ENCODE measurements at regions of chr9 and their contacts with region 1.

Region 1: GRCh38 chr9:38088006-38088925 is 19.2 kb upstream of the SHB start:
- DNase-seq: no peak
- ATAC-seq: peak; percentile 70
- H3K4me3 ChIP-seq: no peak overlapping the region
- H3K27ac ChIP-seq: peak overlapping the region; percentile 13; the same call in 1 of the 2 replicates
- H3K4me1 ChIP-seq: peaks cover 37% of the 10 kb centered on the region
- H3K27me3 ChIP-seq: no peaks in the 10 kb centered on the region
- CTCF ChIP-seq: peak; percentile 86 to 98 (median 97)
- EP300 ChIP-seq: no peak
- POLR2A ChIP-seq: no peak
- RAD21 ChIP-seq: peak; percentile 90

Region 2: GRCh38 chr9:36974731-36975130 is 1113.5 kb before region 1 on chr9:
- CTCF ChIA-PET with region 1: no interaction called
- POLR2A ChIA-PET with region 1: no interaction called
- RAD21 ChIA-PET with region 1: no interaction called
- SMC1A ChIA-PET with region 1: no interaction called
- in situ Hi-C with region 1: no loop called
- intact Hi-C with region 1: no loop called
- DNase-seq: no peak
- ATAC-seq: no peak
- H3K4me3 ChIP-seq: no peak overlapping the region
- H3K27ac ChIP-seq: no peak overlapping the region
- H3K4me1 ChIP-seq: no peaks in the 10 kb centered on the region
- H3K27me3 ChIP-seq: no peaks in the 10 kb centered on the region
- CTCF ChIP-seq: peak in 1 of 3 experiments; percentile 26; a peak in 2 of 6 replicates
- EP300 ChIP-seq: no peak
- POLR2A ChIP-seq: 0 out of 2 replicates have a peak, but pooled peaks have one; percentile 29
- RAD21 ChIP-seq: no peak

Region 3: DNA sequence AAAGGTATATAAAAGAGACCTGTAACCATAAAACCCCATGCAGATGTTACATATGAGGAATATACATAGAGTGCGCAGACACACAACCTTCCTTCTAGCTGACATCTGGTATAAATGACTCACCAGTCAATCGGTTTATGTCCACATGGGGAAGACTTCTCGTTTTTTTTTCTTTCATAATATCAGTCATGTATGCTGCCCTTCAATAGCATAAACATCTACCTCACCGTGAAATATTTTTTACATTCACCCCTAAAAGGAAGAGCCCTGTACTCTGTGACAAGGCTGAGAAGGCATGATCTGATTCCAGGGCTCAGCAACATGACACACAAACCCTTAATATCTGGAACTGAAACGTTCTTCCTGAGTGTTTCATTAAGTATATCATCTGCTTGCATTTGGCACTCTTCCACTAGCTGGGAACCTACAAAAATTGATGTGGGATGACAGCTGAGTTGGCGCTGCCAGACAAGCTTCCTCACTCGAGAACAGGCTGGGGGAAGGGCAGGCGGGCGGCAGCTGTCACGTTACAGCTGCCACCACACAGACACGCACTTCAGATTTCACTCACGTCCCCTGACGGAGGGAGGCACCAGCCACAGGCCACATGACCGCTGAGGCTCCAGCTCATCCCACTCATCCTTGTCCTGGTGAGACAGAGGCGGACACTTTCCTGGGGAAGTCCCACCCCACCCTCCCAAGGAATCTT is 93.5 kb before region 1 on chr9:
- CTCF ChIA-PET with region 1: interaction called, 5 read pairs
- POLR2A ChIA-PET with region 1: no interaction called
- RAD21 ChIA-PET with region 1: interaction called, 15 read pairs
- SMC1A ChIA-PET with region 1: interaction called, 8 read pairs
- in situ Hi-C with region 1: no loop called
- intact Hi-C with region 1: no loop called
- DNase-seq: peak; percentile 66
- ATAC-seq: peak; percentile 88
- H3K4me3 ChIP-seq: no peak overlapping the region
- H3K27ac ChIP-seq: peak overlapping the region; percentile 67
- H3K4me1 ChIP-seq: peaks cover 50% of the 10 kb centered on the region
- H3K27me3 ChIP-seq: no peaks in the 10 kb centered on the region
- CTCF ChIP-seq: no peak
- EP300 ChIP-seq: peak; percentile 91 to 92
- POLR2A ChIP-seq: no peak
- RAD21 ChIP-seq: no peak

Region 4: DNA sequence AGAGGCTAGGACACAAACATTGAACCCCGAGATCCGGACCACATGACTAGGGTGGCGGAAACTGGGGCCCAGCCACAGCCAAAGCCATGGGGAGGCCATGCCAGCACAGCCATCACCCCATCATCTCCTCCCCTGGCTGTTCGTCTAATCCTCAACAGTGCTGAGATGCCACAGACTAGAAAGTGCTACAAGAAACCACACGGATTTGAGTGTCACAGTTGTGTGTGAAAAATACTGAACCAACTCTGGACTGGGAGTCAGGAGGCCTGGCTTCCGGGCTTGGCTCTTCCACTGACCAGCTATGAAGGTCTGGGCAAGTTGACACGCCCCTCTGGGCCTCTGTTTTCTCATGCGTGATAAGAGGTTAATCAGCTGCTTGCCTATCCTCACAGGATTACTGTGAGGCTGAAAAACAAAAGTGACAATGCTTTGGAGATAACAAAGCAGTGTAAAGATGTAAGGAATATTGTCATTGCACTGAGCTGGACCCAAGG is 19.6 kb after region 1 on chr9:
- CTCF ChIA-PET with region 1: interaction called, 148 read pairs
- POLR2A ChIA-PET with region 1: interaction called, 96 read pairs
- RAD21 ChIA-PET with region 1: interaction called, 205 read pairs
- SMC1A ChIA-PET with region 1: interaction called, 359 read pairs
- in situ Hi-C with region 1: no loop called
- intact Hi-C with region 1: loop called (anchors 2 kb)
- DNase-seq: no peak
- ATAC-seq: peak; percentile 76
- H3K4me3 ChIP-seq: no peak overlapping the region
- H3K27ac ChIP-seq: peak overlapping the region; percentile 30
- H3K4me1 ChIP-seq: peaks cover 10% of the 10 kb centered on the region
- H3K27me3 ChIP-seq: no peaks in the 10 kb centered on the region
- CTCF ChIP-seq: no peak
- EP300 ChIP-seq: no peak
- POLR2A ChIP-seq: no peak
- RAD21 ChIP-seq: no peak

Region 5: GRCh38 chr9:38141746-38142591 is 53.7 kb after region 1 on chr9:
- CTCF ChIA-PET with region 1: interaction called, 116 read pairs
- POLR2A ChIA-PET with region 1: interaction called, 5 read pairs
- RAD21 ChIA-PET with region 1: interaction called, 31 read pairs
- SMC1A ChIA-PET with region 1: interaction called, 28 read pairs
- in situ Hi-C with region 1: no loop called
- intact Hi-C with region 1: no loop called
- DNase-seq: no peak
- ATAC-seq: peak; percentile 76
- H3K4me3 ChIP-seq: no peak overlapping the region
- H3K27ac ChIP-seq: no peak overlapping the region
- H3K4me1 ChIP-seq: no peaks in the 10 kb centered on the region
- H3K27me3 ChIP-seq: peaks cover 0 to 1% of the 10 kb centered on the region in 2 experiments; a peak in 1 of 4 replicates
- CTCF ChIP-seq: no peak
- EP300 ChIP-seq: 0 out of 4 replicates have a peak, but pooled peaks of 1 of the 2 experiments have one; percentile 39
- POLR2A ChIP-seq: no peak
- RAD21 ChIP-seq: no peak

Region 6: DNA sequence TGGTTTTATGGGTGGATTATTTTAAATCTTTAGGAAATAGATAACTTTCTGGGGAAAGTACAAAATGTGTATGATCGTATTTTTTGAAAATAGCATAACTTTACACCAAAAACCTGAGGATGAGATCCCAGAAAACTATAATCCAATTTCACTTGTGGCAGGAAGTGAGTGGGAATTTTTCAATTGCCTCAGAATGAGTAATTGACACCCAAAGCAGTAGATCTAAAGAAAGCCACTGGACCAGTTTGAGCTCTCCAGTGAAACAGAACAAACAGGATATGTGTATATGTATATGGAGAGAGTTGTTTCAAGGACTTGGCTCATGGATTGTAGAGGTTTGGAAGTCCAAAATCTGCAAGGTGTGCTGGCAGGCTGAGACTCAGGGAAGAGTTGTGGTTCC is 90.0 kb after region 1 on chr9:
- CTCF ChIA-PET with region 1: interaction called, 9 read pairs
- POLR2A ChIA-PET with region 1: interaction called, 5 read pairs
- RAD21 ChIA-PET with region 1: interaction called, 33 read pairs
- SMC1A ChIA-PET with region 1: interaction called, 112 read pairs
- in situ Hi-C with region 1: no loop called
- intact Hi-C with region 1: no loop called
- DNase-seq: no peak
- ATAC-seq: peak; percentile 30; the same call in 1 of the 3 replicates
- H3K4me3 ChIP-seq: no peak overlapping the region
- H3K27ac ChIP-seq: no peak overlapping the region
- H3K4me1 ChIP-seq: peaks cover 18% of the 10 kb centered on the region
- H3K27me3 ChIP-seq: no peaks in the 10 kb centered on the region
- CTCF ChIP-seq: no peak
- EP300 ChIP-seq: no peak
- POLR2A ChIP-seq: no peak
- RAD21 ChIP-seq: no peak

Region 7: GRCh38 chr9:38318759-38319495 is 230.7 kb after region 1 on chr9:
- CTCF ChIA-PET with region 1: interaction called, 13 read pairs
- POLR2A ChIA-PET with region 1: no interaction called
- RAD21 ChIA-PET with region 1: interaction called, 9 read pairs
- SMC1A ChIA-PET with region 1: interaction called, 8 read pairs
- in situ Hi-C with region 1: no loop called
- intact Hi-C with region 1: loop called (anchors 5 kb)
- DNase-seq: peak; percentile 90
- ATAC-seq: peak; percentile 95
- H3K4me3 ChIP-seq: no peak overlapping the region
- H3K27ac ChIP-seq: peak overlapping the region; percentile 37
- H3K4me1 ChIP-seq: peaks cover 11% of the 10 kb centered on the region
- H3K27me3 ChIP-seq: no peaks in the 10 kb centered on the region; a peak in 1 of 4 replicates
- CTCF ChIP-seq: no peak
- EP300 ChIP-seq: peak; percentile 56 to 94
- POLR2A ChIP-seq: no peak
- RAD21 ChIP-seq: no peak

Measured in GM12878 (cell line).